Activated CD4-positive, alpha-beta memory T cell treated with anti-CD3 and anti-CD28 coated beads, Interleukin-2, amount 10 ng/mL, durations not matched to agents 7 days and 5 days (primary cell): ENCODE measurements at regions of chr5 and their contacts with region 1.

Region 1: DNA sequence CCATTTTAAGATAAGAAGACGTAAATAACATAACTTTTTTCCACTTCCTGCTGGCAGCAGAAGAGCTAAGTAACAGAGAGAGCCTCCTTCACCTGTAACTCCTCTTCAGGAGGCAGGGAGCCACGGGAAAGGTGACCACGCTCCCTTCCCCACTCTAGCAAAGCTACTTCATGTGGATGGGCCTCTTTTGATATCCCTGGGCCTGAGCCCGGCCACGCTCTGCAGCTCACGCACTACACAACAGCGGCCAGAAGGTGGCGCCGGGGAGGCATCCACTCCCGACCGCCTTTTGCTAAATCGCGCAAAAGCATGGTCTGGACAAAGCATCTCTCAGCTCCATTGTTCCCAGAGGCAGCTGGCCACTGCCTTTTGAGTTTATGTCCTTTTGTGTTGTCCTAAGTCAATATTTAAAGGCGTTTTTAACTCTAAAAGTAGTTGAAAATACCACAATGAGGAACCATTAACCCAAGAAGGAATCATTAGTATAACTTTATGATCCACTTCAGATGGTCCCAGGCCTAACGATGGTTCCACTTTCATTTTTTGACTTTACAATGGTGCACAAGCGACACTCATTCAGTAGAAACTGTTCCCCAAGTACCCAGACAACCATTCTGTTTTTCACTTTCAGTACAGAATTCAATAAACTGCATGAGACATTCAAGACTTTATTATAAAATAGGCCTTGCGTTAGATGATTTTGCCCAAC is 23.6 kb downstream of the CMBL start:
- DNase-seq: peak; percentile 84
- H3K4me3 Mint-ChIP-seq: peak overlapping the region; percentile 32
- H3K27ac Mint-ChIP-seq: peak overlapping the region; percentile 48
- H3K4me1 Mint-ChIP-seq: peaks cover 15% of the 10 kb centered on the region
- H3K27me3 Mint-ChIP-seq: no peaks in the 10 kb centered on the region

Region 2: DNA sequence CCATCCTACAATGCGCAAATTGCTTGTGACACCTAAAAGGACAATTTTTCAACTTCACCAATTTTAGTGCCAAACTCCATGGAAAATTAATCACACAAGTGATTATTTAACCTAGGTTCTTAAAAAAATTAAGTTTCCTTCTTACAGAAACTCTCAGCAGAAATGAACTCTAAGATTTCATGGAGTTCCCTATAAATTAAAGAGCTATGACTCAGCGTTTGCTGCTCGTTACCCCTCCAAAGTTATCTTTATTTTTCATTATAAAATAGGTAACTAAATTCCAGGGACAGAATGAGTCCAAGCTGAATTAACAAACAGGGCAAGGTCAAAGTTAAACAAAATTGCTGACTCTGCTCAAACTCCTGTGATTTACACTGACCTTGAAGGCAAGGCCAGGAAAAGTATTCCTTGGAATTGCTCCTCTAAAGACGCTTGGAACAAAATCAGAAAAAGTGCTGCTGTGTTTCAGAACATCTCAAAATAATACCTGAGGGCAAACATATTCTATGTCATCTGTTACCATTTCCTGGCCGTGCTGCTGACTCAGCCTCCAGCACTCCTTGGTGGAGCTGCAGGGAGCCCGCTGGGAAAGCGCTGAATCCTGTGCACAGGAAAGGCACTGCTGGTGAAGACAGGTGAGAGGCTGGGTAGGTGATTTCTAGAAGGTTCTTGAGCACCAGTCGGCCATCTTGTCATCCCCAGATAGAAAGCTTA is 26.1 kb after region 1 on chr5:
- CTCF ChIA-PET with region 1: interaction called, 10 read pairs
- POLR2A ChIA-PET with region 1: no interaction called
- DNase-seq: no peak
- H3K4me3 Mint-ChIP-seq: no peak overlapping the region
- H3K27ac Mint-ChIP-seq: no peak overlapping the region
- H3K4me1 Mint-ChIP-seq: peaks cover 19% of the 10 kb centered on the region
- H3K27me3 Mint-ChIP-seq: peaks cover 19% of the 10 kb centered on the region

Region 3: DNA sequence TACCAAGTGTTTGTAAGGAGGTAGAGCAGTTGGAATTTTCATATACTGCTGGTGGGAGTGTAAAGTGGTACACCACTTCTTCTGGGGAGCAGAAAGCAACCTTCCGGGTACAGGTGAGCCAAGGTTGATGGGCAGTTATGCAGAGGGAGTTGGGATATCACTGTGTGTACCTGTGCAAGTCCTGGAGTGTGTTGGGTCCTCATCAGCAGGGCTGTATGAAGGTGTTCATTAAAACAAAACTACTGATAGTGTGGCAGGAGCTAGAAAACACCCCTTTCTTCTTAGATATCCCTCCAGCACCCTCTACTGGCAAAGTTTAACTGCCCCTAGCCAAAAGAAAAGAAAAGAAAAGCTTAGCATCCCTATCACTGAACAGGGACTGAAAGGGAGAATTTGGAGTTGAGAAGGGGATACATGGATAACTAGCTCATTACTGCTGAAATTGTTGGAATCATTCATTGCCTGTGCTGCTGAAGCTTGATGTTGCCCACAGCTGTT is 80.2 kb after region 1 on chr5:
- CTCF ChIA-PET with region 1: interaction called, 28 read pairs
- POLR2A ChIA-PET with region 1: no interaction called
- DNase-seq: no peak
- H3K4me3 Mint-ChIP-seq: no peak overlapping the region
- H3K27ac Mint-ChIP-seq: no peak overlapping the region
- H3K4me1 Mint-ChIP-seq: peaks cover 21% of the 10 kb centered on the region
- H3K27me3 Mint-ChIP-seq: no peaks in the 10 kb centered on the region

Region 4: GRCh38 chr5:10424124-10424731 is 140.1 kb after region 1 on chr5:
- CTCF ChIA-PET with region 1: interaction called, 41 read pairs
- POLR2A ChIA-PET with region 1: no interaction called
- DNase-seq: no peak
- H3K4me3 Mint-ChIP-seq: no peak overlapping the region
- H3K27ac Mint-ChIP-seq: no peak overlapping the region
- H3K4me1 Mint-ChIP-seq: peaks cover 30% of the 10 kb centered on the region
- H3K27me3 Mint-ChIP-seq: no peaks in the 10 kb centered on the region

Region 5: GRCh38 chr5:10505517-10506095 is 221.5 kb after region 1 on chr5:
- CTCF ChIA-PET with region 1: no interaction called
- POLR2A ChIA-PET with region 1: no interaction called
- DNase-seq: no peak
- H3K4me3 Mint-ChIP-seq: no peak overlapping the region
- H3K27ac Mint-ChIP-seq: no peak overlapping the region
- H3K4me1 Mint-ChIP-seq: no peaks in the 10 kb centered on the region
- H3K27me3 Mint-ChIP-seq: no peaks in the 10 kb centered on the region